Heart right ventricle (tissue), 16 donors: ENCODE measurements at regions of chr2 and their contacts with region 1.

Region 1: GRCh38 chr2:109135359-109136197 is 6.6 kb downstream of the SH3RF3 start:
- DNase-seq: no peak
- ATAC-seq: peak in 2 of 8 donors; percentile 48 to 67
- H3K4me3 ChIP-seq: no peak overlapping the region
- H3K27ac ChIP-seq: no peak overlapping the region
- H3K4me1 ChIP-seq: peaks cover 2 to 25% (median 11%) of the 10 kb centered on the region in 9 donors
- H3K27me3 ChIP-seq: peaks cover 0 to 23% (median 0%) of the 10 kb centered on the region in 7 donors
- CTCF ChIP-seq: no peak

Region 2: DNA sequence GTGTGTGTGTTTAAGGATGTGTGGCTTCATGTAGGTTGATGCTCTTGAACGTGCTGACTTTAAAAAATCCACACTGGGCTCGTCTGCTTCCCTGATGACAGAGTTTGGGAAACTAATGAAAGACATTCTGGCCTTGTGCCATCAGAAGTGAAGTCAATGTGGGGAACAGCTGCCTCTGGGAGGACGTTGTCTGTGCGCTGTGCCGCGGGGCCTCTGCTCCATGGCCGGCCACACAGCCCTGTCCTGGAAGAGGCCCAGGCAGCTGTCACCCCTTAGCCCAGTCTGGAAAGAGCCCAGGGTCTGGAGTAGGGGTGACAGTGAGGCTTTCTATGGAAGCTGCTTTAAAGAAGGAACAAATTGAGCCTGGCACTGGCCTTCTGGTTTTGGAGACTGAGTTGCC is 149.2 kb after region 1 on chr2:
- intact Hi-C with region 1: loop called in 1 of 10 experiments (anchors 5 kb)
- DNase-seq: peak; percentile 63 to 69
- ATAC-seq: peak; percentile 78 to 90 (median 82)
- H3K4me3 ChIP-seq: no peak overlapping the region
- H3K27ac ChIP-seq: peak overlapping the region in 4 of 10 donors; percentile 3 to 44 (median 28)
- H3K4me1 ChIP-seq: peaks cover 14 to 65% (median 42%) of the 10 kb centered on the region in 9 donors
- H3K27me3 ChIP-seq: no peaks in the 10 kb centered on the region
- CTCF ChIP-seq: no peak